Colonic mucosa (tissue), 4 donors: ENCODE measurements at regions of chr20 and their contacts with region 1.

Region 1: GRCh38 chr20:63025534-63026331 is 19.0 kb upstream of the BHLHE23 start:
- DNase-seq: no peak
- H3K4me3 ChIP-seq: no peak overlapping the region
- H3K27ac ChIP-seq: no peak overlapping the region
- H3K4me1 ChIP-seq: no peaks in the 10 kb centered on the region
- H3K27me3 ChIP-seq: peaks cover 25% of the 10 kb centered on the region
- CTCF ChIP-seq: no peak

Region 2: DNA sequence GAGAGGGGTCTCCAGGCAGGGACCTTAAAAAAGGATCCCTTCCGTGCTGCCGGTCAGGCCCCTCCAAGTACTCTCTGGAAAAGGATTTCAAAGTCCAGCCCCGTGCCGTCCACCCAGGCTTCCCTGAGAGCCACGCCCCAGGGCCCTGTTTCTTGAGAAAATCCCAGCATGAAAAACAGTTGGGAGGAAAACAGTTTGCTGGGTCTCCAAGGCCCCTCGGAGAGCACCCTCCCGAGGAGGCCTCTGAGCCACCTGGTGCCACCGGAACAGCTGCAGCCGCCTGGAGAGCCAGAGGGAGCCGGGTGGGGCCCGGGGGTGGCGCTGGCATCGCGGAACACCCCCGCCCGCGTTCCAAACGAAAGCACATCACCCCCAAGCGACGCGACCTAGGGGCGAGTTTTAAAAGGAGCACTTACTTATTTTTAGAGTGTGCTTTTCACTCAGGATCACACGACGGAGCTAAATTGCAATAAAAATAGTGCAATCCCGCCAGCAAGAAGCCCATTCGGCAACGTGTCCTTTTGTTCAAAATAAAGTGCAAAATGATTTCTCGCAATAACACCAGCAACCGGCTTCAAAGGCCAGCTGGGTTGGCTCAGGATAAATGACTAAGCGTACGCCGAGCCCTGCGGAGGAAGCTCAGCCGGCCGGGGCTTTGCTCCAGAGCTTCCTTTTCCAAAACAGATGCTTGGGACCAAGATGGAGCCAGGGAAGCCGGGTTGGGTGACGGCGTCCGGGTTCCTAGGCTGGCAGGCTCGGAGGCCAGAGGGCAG is 126.0 kb after region 1 on chr20:
- intact Hi-C with region 1: no loop called
- DNase-seq: no peak
- H3K4me3 ChIP-seq: no peak overlapping the region
- H3K27ac ChIP-seq: no peak overlapping the region
- H3K4me1 ChIP-seq: no peaks in the 10 kb centered on the region
- H3K27me3 ChIP-seq: peaks cover 10% of the 10 kb centered on the region
- CTCF ChIP-seq: no peak

Region 3: GRCh38 chr20:64161356-64162238 is 1135.9 kb after region 1 on chr20:
- intact Hi-C with region 1: loop called (anchors 10 kb)
- DNase-seq: peak; percentile 25
- H3K4me3 ChIP-seq: no peak overlapping the region
- H3K27ac ChIP-seq: no peak overlapping the region
- H3K4me1 ChIP-seq: no peaks in the 10 kb centered on the region
- H3K27me3 ChIP-seq: peaks cover 14% of the 10 kb centered on the region
- CTCF ChIP-seq: no peak